ENCODE measurements at regions of chr13 and their contacts with region 1.

Region 1: GRCh38 chr13:26482451-26483197 is 74.9 kb upstream of the WASF3 start:
- DNase-seq: no peak
- H3K4me3 ChIP-seq: no peak overlapping the region
- H3K27me3 ChIP-seq: no peaks in the 10 kb centered on the region
- CTCF ChIP-seq: peak; percentile 88

Region 2: GRCh38 chr13:26382366-26382765 is 100.3 kb before region 1 on chr13:
- CTCF ChIA-PET with region 1: no interaction called
- POLR2A ChIA-PET with region 1: no interaction called
- DNase-seq: no peak
- H3K4me3 ChIP-seq: no peak overlapping the region
- H3K27me3 ChIP-seq: no peaks in the 10 kb centered on the region
- CTCF ChIP-seq: no peak

Region 3: DNA sequence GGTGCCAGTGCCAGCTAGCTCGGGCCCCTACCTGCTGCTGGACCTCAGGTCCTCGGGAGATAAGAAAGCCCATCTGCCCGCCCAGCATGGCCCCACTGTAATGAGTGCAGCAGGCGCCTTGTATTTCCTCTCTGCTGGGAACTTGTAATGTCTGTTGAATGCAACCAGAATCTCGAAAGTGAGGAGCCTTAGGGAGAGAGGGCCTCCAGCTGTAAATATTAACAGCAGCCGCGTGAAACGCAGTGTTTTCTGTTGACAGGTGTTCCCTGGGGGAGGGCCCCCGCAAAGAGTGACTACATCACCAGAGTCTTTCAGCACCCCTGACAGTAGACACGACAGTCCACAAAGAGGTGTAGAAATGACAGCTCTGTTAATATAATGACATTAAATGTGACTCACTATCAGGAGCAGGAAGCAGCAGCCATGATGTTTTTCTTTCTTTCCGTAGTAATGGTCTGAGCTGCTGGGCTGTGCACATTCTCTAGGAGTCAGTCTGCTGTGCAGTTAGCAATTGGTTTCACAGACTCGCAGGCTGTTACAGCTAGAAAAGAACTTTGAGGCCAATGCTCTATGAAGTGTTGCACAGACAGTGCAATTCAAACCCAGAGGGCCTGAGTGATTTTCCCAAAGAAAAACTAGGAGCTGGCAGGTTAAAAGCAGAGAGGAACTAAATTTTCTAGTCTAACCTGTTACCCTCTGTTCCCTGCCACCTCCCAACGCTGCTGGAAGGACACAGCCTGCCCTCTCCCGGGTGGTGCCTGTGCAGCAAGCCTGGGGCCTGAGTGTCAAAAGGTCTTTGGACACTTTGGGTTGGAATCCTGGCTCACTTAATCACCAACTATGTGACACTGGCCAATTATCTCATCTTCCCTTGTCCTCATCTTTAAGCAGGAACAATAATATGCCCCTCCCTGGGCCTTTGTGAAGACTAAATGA is 16.3 kb after region 1 on chr13:
- CTCF ChIA-PET with region 1: interaction called, 88 read pairs
- POLR2A ChIA-PET with region 1: no interaction called
- DNase-seq: no peak
- H3K4me3 ChIP-seq: no peak overlapping the region
- H3K27me3 ChIP-seq: no peaks in the 10 kb centered on the region
- CTCF ChIP-seq: no peak